Heart left ventricle (tissue), 16 donors: ENCODE measurements at regions of chr10 and their contacts with region 1.

Region 1: GRCh38 chr10:95374597-95375209 is 83.9 kb upstream of the PDLIM1 start:
- DNase-seq: peak; percentile 71 to 85 (median 83)
- ATAC-seq: peak; percentile 70 to 89 (median 86)
- H3K4me3 ChIP-seq: no peak overlapping the region
- H3K27ac ChIP-seq: peak overlapping the region in 7 of 12 donors; percentile 0 to 77 (median 21)
- H3K4me1 ChIP-seq: peaks cover 0 to 61% (median 36%) of the 10 kb centered on the region in 12 donors
- H3K27me3 ChIP-seq: no peaks in the 10 kb centered on the region
- CTCF ChIP-seq: peak; percentile 86 to 98 (median 94)
- POLR2A ChIP-seq: no peak

Region 2: GRCh38 chr10:95414844-95415485 is 40.3 kb after region 1 on chr10:
- intact Hi-C with region 1: loop called in 6 of 10 experiments (anchors 5 kb)
- DNase-seq: peak in 4 of 5 donors; percentile 61 to 79 (median 73)
- ATAC-seq: peak; percentile 83 to 86 (median 84)
- H3K4me3 ChIP-seq: peak overlapping the region; percentile 24 to 63 (median 50)
- H3K27ac ChIP-seq: peak overlapping the region; percentile 82 to 98 (median 92)
- H3K4me1 ChIP-seq: peaks cover 6 to 87% (median 47%) of the 10 kb centered on the region in 12 donors
- H3K27me3 ChIP-seq: no peaks in the 10 kb centered on the region
- CTCF ChIP-seq: no peak
- POLR2A ChIP-seq: peak in 1 of 2 donors; percentile 7

Region 3: DNA sequence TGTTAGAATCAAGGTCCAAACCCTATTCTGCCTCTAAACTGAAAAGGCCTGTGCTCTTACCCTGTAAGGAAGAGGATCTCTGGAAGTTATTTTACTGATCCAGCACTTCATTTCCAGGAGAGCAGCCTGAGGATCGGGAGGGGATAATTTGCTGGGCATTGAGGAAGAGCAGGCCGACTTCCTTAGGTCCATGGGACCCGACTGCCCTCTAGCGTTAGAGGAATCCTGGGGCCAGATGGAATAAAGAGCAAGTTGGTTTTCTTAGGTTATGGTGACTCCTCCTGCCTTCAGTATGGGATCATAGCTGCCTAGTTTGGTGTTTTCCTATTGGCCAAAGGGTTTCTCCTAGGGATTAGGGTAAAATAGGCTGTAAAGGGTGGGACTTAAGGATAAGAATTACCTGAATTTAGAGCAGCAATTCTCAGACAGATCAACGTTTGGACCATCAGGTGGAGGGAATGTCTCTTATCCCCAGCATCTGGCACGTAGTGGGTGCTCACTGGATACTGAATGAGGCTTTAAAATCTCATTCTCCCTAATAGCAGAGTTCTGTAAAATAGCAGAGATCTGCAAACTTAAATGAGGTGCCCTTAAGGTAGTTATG is 226.5 kb after region 1 on chr10:
- intact Hi-C with region 1: loop called (anchors 1 to 2 kb)
- DNase-seq: peak; percentile 70 to 83 (median 79)
- ATAC-seq: peak; percentile 66 to 91 (median 86)
- H3K4me3 ChIP-seq: no peak overlapping the region
- H3K27ac ChIP-seq: peak overlapping the region in 5 of 12 donors; percentile 26 to 79 (median 48)
- H3K4me1 ChIP-seq: peaks cover 0 to 33% (median 12%) of the 10 kb centered on the region in 12 donors
- H3K27me3 ChIP-seq: no peaks in the 10 kb centered on the region
- CTCF ChIP-seq: peak; percentile 86 to 99 (median 96)
- POLR2A ChIP-seq: no peak